ENCODE measurements at regions of chr3 and their contacts with region 1.

Region 1: GRCh38 chr3:112293368-112294321 is at the start of gene SLC9C1:
- DNase-seq: peak; percentile 86
- H3K4me3 ChIP-seq: peak within 1 kb of the TSS; percentile 18 to 51 (median 41)
- H3K27ac ChIP-seq: peak within 1 kb of the TSS; percentile 58
- H3K4me1 ChIP-seq: no peaks in the 10 kb centered on the region
- H3K27me3 ChIP-seq: peaks cover 0 to 4% of the 10 kb centered on the region in 2 experiments
- CTCF ChIP-seq: peak; percentile 51 to 54
- POLR2A ChIP-seq: peak; percentile 15
- total RNA-seq, gene SLC9C1: 0.09 TPM in 1 of 2 replicates, not detected in the other

Region 2: GRCh38 chr3:112136959-112137693 is 156.5 kb before region 1 on chr3:
- CTCF ChIA-PET with region 1: interaction called, 13 read pairs
- POLR2A ChIA-PET with region 1: no interaction called
- dilution Hi-C with region 1: no loop called
- intact Hi-C with region 1: no loop called
- DNase-seq: peak; percentile 57
- H3K4me3 ChIP-seq: no peak overlapping the region
- H3K27ac ChIP-seq: no peak overlapping the region
- H3K4me1 ChIP-seq: no peaks in the 10 kb centered on the region
- H3K27me3 ChIP-seq: peaks cover 3 to 5% of the 10 kb centered on the region in 2 experiments
- CTCF ChIP-seq: peak; percentile 45 to 54
- POLR2A ChIP-seq: no peak

Region 3: GRCh38 chr3:112327371-112327951 is 33.8 kb after region 1 on chr3:
- CTCF ChIA-PET with region 1: interaction called, 19 read pairs
- POLR2A ChIA-PET with region 1: no interaction called
- dilution Hi-C with region 1: no loop called
- intact Hi-C with region 1: loop called (anchors 1 kb)
- DNase-seq: peak; percentile 79
- H3K4me3 ChIP-seq: no peak overlapping the region
- H3K27ac ChIP-seq: no peak overlapping the region
- H3K4me1 ChIP-seq: no peaks in the 10 kb centered on the region
- H3K27me3 ChIP-seq: peaks cover 0 to 2% of the 10 kb centered on the region in 2 experiments
- CTCF ChIP-seq: peak; percentile 34 to 53
- POLR2A ChIP-seq: no peak

Region 4: DNA sequence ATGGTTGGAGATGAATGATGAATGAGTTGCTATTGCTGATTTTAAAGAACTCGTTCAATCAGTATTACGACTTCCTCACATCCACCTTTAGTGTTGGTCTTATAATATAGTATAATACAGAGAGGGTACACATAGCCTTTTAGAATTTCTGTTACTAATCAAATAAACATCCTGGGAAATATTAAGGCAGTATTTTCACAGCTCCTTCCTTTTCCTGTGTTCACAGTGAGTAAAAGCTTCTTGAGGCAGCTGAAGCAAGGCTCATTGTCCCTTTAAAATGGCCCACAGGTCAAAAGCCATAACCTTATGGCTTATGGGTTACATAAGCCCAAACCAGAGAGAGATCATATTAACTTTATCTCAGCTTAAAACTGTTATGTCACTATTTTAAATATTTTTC is 207.0 kb after region 1 on chr3:
- CTCF ChIA-PET with region 1: interaction called, 10 read pairs
- POLR2A ChIA-PET with region 1: no interaction called
- dilution Hi-C with region 1: no loop called
- intact Hi-C with region 1: no loop called
- DNase-seq: peak; percentile 93
- H3K4me3 ChIP-seq: no peak overlapping the region
- H3K27ac ChIP-seq: peak overlapping the region; percentile 64
- H3K4me1 ChIP-seq: peaks cover 18% of the 10 kb centered on the region
- H3K27me3 ChIP-seq: no peaks in the 10 kb centered on the region
- CTCF ChIP-seq: no peak
- POLR2A ChIP-seq: peak; percentile 76

Region 5: DNA sequence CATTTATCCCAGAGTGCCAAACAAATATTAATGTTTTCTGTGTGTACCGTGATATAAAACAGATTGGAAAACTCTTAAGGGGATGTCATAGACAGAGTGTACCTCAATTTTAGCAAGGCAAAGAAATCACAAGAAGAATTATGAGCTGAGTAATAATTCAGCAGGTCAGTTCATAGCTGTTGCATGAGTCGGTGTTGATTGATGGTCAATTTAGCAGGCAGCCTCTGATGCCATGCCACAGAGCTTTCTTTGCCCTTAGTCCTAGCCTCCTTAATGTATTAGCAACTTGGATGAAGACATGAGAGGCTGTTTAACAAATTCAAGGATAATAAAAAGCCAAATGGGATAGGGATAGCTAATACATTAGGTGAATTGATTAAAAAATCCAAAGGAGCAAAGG is 275.0 kb after region 1 on chr3:
- CTCF ChIA-PET with region 1: interaction called, 14 read pairs
- POLR2A ChIA-PET with region 1: no interaction called
- dilution Hi-C with region 1: no loop called
- intact Hi-C with region 1: no loop called
- DNase-seq: peak; percentile 31
- H3K4me3 ChIP-seq: no peak overlapping the region
- H3K27ac ChIP-seq: no peak overlapping the region
- H3K4me1 ChIP-seq: peaks cover 18% of the 10 kb centered on the region
- H3K27me3 ChIP-seq: no peaks in the 10 kb centered on the region
- CTCF ChIP-seq: no peak
- POLR2A ChIP-seq: no peak

Region 6: DNA sequence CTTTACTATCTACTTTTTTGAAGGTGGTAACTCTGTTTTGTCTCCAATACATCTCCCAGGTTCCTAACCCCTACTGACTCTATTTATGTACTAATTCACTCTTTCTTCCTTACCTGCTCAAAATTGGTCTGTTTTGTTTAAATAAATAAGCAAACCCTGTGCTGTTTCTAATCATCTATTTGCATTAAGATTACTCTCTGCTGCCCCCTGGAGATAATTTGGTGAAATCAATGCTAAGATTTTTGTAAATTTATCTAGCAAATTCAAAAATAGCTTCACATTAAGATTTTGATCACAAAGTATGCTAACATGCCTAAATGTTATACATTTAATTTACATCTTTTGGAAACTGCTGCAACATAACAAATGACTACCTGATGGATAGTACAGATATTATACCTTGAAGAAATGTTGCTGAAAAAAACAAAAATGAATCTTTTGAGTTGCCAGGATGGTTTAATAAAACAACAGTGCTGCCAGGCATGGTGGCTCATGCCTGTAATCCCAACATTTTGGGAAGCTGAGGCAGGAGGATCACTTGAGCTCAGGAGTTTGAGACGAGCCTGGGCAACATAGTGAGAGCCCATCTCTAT is 685.7 kb after region 1 on chr3:
- CTCF ChIA-PET with region 1: interaction called, 5 read pairs
- POLR2A ChIA-PET with region 1: no interaction called
- dilution Hi-C with region 1: no loop called
- intact Hi-C with region 1: loop called (anchors 1 kb)
- DNase-seq: peak; percentile 48
- H3K4me3 ChIP-seq: no peak overlapping the region
- H3K27ac ChIP-seq: no peak overlapping the region
- H3K4me1 ChIP-seq: no peaks in the 10 kb centered on the region
- H3K27me3 ChIP-seq: peaks cover 3 to 13% of the 10 kb centered on the region in 2 experiments
- CTCF ChIP-seq: peak; percentile 34 to 36
- POLR2A ChIP-seq: no peak